Tibial artery (tissue), 4 donors: ENCODE measurements at regions of chr7 and their contacts with region 1.

Region 1: GRCh38 chr7:70856866-70857630 is 274.9 kb upstream of the GALNT17 start:
- DNase-seq: peak; percentile 47 to 72
- H3K4me3 ChIP-seq: no peak overlapping the region
- H3K27ac ChIP-seq: no peak overlapping the region
- H3K4me1 ChIP-seq: no peaks in the 10 kb centered on the region
- H3K27me3 ChIP-seq: no peaks in the 10 kb centered on the region
- CTCF ChIP-seq: peak; percentile 87 to 89

Region 2: GRCh38 chr7:71055504-71055903 is 198.5 kb after region 1 on chr7:
- intact Hi-C with region 1: no loop called
- DNase-seq: no peak
- H3K4me3 ChIP-seq: no peak overlapping the region
- H3K27ac ChIP-seq: no peak overlapping the region
- H3K4me1 ChIP-seq: no peaks in the 10 kb centered on the region
- H3K27me3 ChIP-seq: no peaks in the 10 kb centered on the region
- CTCF ChIP-seq: no peak

Region 3: GRCh38 chr7:71338866-71339265 is 481.8 kb after region 1 on chr7:
- intact Hi-C with region 1: loop called (anchors 5 kb)
- DNase-seq: no peak
- H3K4me3 ChIP-seq: no peak overlapping the region
- H3K27ac ChIP-seq: no peak overlapping the region
- H3K4me1 ChIP-seq: peaks cover 0 to 14% (median 2%) of the 10 kb centered on the region in 4 donors
- H3K27me3 ChIP-seq: no peaks in the 10 kb centered on the region
- CTCF ChIP-seq: no peak